Endothelial cell of umbilical vein (primary cell): ENCODE measurements at regions of chr19 and their contacts with region 1.

Region 1: GRCh38 chr19:44820648-44821609 is 12.0 kb downstream of the BCAM start:
- DNase-seq: peak; percentile 50
- H3K4me3 ChIP-seq: peak overlapping the region in 1 of 3 experiments; percentile 2
- H3K27ac ChIP-seq: no peak overlapping the region
- H3K4me1 ChIP-seq: peaks cover 3% of the 10 kb centered on the region
- H3K27me3 ChIP-seq: no peaks in the 10 kb centered on the region
- CTCF ChIP-seq: no peak
- POLR2A ChIP-seq: no peak

Region 2: GRCh38 chr19:44732615-44733014 is 88.3 kb before region 1 on chr19:
- CTCF ChIA-PET with region 1: no interaction called
- POLR2A ChIA-PET with region 1: no interaction called
- dilution Hi-C with region 1: no loop called
- intact Hi-C with region 1: no loop called
- DNase-seq: no peak
- H3K4me3 ChIP-seq: no peak overlapping the region
- H3K27ac ChIP-seq: no peak overlapping the region
- H3K4me1 ChIP-seq: no peaks in the 10 kb centered on the region
- H3K27me3 ChIP-seq: no peaks in the 10 kb centered on the region
- CTCF ChIP-seq: no peak
- POLR2A ChIP-seq: no peak

Region 3: GRCh38 chr19:44808463-44809371 is 12.2 kb before region 1 on chr19 and contains the start of gene BCAM:
- CTCF ChIA-PET with region 1: interaction called, 17 read pairs
- POLR2A ChIA-PET with region 1: no interaction called
- dilution Hi-C with region 1: no loop called
- intact Hi-C with region 1: no loop called
- DNase-seq: peak; percentile 49
- H3K4me3 ChIP-seq: peak within 1 kb of the TSS; percentile 60 to 66 (median 64)
- H3K27ac ChIP-seq: no peak within 1 kb of the TSS
- H3K4me1 ChIP-seq: peaks cover 16% of the 10 kb centered on the region
- H3K27me3 ChIP-seq: no peaks in the 10 kb centered on the region
- CTCF ChIP-seq: no peak
- POLR2A ChIP-seq: peak; percentile 68
- total RNA-seq, gene BCAM: 28.5 and 29.0 TPM in 2 replicates